Heart left ventricle (tissue), 16 donors: ENCODE measurements at regions of chr3 and their contacts with region 1.

Region 1: DNA sequence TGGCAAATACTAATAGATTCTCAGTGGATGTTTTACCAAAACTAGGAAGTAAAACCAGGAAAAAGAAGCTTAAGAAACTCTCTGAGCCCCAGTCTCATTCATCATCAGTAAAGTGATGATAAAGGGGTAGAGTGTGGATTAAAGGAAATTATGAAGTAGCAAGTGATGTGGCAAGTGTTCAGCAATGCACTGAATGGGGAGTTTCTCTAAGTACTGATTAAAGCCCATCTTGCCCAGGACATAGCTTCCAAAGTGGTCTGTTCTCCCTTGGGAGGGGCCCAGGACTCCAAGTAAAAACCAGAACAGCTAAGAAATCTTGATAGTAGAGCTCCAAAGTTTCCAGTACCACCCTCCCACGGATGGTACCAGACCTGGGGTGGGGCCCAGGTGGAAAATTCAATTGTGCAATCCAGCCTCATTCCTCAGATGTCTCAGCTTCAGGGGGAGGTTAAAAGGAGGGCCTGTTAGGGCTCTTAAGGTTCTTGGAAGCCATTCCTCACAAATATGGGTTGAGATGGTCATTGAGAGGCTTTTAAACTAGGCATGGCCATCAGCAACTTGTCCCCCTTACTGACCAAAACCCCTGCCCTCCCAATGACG is 137.2 kb downstream of the WNT5A start:
- DNase-seq: no peak
- ATAC-seq: no peak
- H3K4me3 ChIP-seq: no peak overlapping the region
- H3K27ac ChIP-seq: no peak overlapping the region
- H3K4me1 ChIP-seq: no peaks in the 10 kb centered on the region
- H3K27me3 ChIP-seq: no peaks in the 10 kb centered on the region
- CTCF ChIP-seq: no peak
- POLR2A ChIP-seq: no peak

Region 2: DNA sequence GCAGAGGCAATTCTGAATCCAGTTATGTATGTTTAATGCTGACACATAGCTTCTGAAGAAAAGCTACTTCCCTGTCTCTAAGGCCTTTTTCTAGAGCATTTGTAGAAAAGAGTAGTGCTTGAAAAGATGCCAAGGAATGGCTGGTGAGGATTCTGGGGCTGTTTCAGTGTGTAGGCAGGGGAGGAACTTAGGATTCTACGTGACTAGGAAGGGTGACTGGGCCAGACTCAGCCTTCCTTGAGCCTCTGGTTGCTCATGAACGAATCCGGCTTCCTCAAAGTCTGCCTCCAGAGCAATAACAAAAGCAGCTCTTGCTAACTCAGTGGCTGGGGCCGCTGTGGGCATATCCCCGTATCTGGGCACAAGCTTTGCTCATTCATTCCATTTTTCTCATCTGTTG is 241.9 kb after region 1 on chr3:
- intact Hi-C with region 1: no loop called
- DNase-seq: no peak
- ATAC-seq: peak in 1 of 4 donors; percentile 66
- H3K4me3 ChIP-seq: no peak overlapping the region
- H3K27ac ChIP-seq: no peak overlapping the region
- H3K4me1 ChIP-seq: no peaks in the 10 kb centered on the region
- H3K27me3 ChIP-seq: peaks cover 0 to 3% (median 0%) of the 10 kb centered on the region in 9 donors
- CTCF ChIP-seq: no peak
- POLR2A ChIP-seq: no peak

Region 3: DNA sequence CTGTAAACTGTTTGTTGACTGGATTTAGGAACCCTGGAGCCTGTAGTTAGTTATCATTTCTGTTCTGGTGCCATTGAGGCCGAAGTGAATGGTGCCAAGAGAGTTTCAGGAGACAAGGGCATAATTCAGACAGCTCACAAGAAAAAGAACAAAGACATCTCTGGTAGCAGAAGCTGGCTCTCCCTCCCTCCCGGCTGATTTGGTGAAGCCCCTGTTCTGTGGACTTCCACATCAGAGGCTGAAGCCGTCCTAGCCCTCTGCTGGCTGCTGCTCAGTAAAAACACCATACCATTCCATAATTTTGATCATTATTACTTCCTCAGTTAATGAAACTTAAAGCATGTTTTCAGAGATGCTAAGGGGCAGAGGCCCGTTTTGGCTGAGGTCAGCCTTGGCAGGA is 518.4 kb after region 1 on chr3:
- intact Hi-C with region 1: loop called in 1 of 10 experiments (anchors 5 kb)
- DNase-seq: no peak
- ATAC-seq: no peak
- H3K4me3 ChIP-seq: no peak overlapping the region
- H3K27ac ChIP-seq: no peak overlapping the region
- H3K4me1 ChIP-seq: no peaks in the 10 kb centered on the region
- H3K27me3 ChIP-seq: peaks cover 0 to 23% (median 0%) of the 10 kb centered on the region in 9 donors
- CTCF ChIP-seq: no peak
- POLR2A ChIP-seq: no peak